GM12878 (cell line): ENCODE measurements at regions of chr11 and their contacts with region 1.

Region 1: GRCh38 chr11:110272919-110273318 is 23.5 kb downstream of the RDX start:
- DNase-seq: no peak
- ATAC-seq: no peak
- H3K4me3 ChIP-seq: no peak overlapping the region
- H3K27ac ChIP-seq: no peak overlapping the region
- H3K4me1 ChIP-seq: no peaks in the 10 kb centered on the region
- H3K27me3 ChIP-seq: no peaks in the 10 kb centered on the region
- CTCF ChIP-seq: no peak
- EP300 ChIP-seq: no peak
- POLR2A ChIP-seq: no peak
- RAD21 ChIP-seq: no peak

Region 2: GRCh38 chr11:110235966-110236365 is 37.0 kb before region 1 on chr11:
- CTCF ChIA-PET with region 1: no interaction called
- POLR2A ChIA-PET with region 1: no interaction called
- RAD21 ChIA-PET with region 1: no interaction called
- SMC1A ChIA-PET with region 1: interaction called, 3 read pairs
- in situ Hi-C with region 1: no loop called
- intact Hi-C with region 1: loop called (anchors 5 kb)
- DNase-seq: no peak
- ATAC-seq: no peak
- H3K4me3 ChIP-seq: no peak overlapping the region
- H3K27ac ChIP-seq: no peak overlapping the region
- H3K4me1 ChIP-seq: no peaks in the 10 kb centered on the region
- H3K27me3 ChIP-seq: no peaks in the 10 kb centered on the region
- CTCF ChIP-seq: no peak
- EP300 ChIP-seq: no peak
- POLR2A ChIP-seq: no peak
- RAD21 ChIP-seq: no peak

Region 3: GRCh38 chr11:110287537-110287936 is 14.6 kb after region 1 on chr11:
- CTCF ChIA-PET with region 1: interaction called, 7 read pairs
- POLR2A ChIA-PET with region 1: interaction called, 4 read pairs
- RAD21 ChIA-PET with region 1: interaction called, 3 read pairs
- SMC1A ChIA-PET with region 1: interaction called, 14 read pairs
- in situ Hi-C with region 1: no loop called
- intact Hi-C with region 1: no loop called
- DNase-seq: no peak
- ATAC-seq: peak; percentile 65
- H3K4me3 ChIP-seq: no peak overlapping the region
- H3K27ac ChIP-seq: no peak overlapping the region
- H3K4me1 ChIP-seq: no peaks in the 10 kb centered on the region
- H3K27me3 ChIP-seq: no peaks in the 10 kb centered on the region
- CTCF ChIP-seq: no peak
- EP300 ChIP-seq: no peak
- POLR2A ChIP-seq: no peak
- RAD21 ChIP-seq: no peak